ENCODE measurements at regions of chrX and their contacts with region 1.

Region 1: GRCh38 chrX:30570505-30570904 is 7.1 kb downstream of the TASL start:
- DNase-seq: no peak
- H3K4me3 ChIP-seq: no peak overlapping the region
- H3K27ac ChIP-seq: no peak overlapping the region
- H3K4me1 ChIP-seq: no peaks in the 10 kb centered on the region
- H3K27me3 ChIP-seq: no peaks in the 10 kb centered on the region
- CTCF ChIP-seq: peak; percentile 28 to 44

Region 2: DNA sequence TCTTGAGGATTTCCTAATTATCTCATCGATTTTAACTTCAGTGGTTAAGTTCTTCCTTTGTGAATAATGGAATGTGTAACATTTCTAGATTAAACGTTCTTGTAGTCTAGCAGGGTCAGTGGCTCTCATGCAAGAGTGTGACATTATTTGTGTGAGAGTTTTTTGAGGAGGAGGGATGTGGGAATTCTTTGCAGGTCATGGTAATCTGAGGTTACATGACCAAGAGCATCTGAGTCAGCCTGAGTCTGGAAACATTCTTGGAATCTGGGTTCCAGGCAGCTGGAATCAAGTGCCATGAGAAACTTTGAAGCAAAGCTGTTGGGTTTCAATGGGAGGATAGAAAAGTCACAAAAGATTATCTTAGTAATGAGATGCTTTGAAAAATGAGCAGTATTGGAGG is 132.2 kb after region 1 on chrX:
- intact Hi-C with region 1: loop called (anchors 10 kb)
- DNase-seq: no peak
- H3K4me3 ChIP-seq: no peak overlapping the region
- H3K27ac ChIP-seq: no peak overlapping the region
- H3K4me1 ChIP-seq: no peaks in the 10 kb centered on the region
- H3K27me3 ChIP-seq: no peaks in the 10 kb centered on the region
- CTCF ChIP-seq: no peak